Panc1 (cell line): ENCODE measurements at regions of chr20 and their contacts with region 1.

Region 1: DNA sequence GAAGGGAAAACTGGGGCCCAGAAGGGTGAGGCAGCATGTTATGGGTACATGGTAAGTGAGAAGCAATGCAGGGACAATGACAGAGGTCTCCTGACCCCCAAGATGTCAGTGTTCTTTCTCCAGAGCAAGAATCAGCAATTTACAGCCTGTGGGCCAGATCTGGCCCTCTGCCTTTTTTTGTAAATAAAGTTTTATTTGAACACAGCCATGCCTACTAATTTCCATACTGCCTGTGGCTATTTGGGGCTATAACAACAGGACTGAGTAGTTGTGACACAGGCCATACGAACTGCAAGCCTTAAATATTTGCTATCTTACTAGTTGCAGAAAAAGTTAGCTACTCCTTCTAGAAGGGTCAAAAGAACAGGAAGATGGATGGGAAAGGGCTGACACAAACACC is 52.5 kb downstream of the PTPRT start:
- DNase-seq: no peak
- ATAC-seq: no peak
- H3K4me3 ChIP-seq: no peak overlapping the region
- H3K27ac ChIP-seq: no peak overlapping the region
- H3K4me1 ChIP-seq: no peaks in the 10 kb centered on the region
- H3K27me3 ChIP-seq: no peaks in the 10 kb centered on the region
- CTCF ChIP-seq: no peak

Region 2: GRCh38 chr20:43032459-43032858 is 104.7 kb before region 1 on chr20:
- CTCF ChIA-PET with region 1: no interaction called
- POLR2A ChIA-PET with region 1: interaction called, 11 read pairs
- in situ Hi-C with region 1: no loop called
- intact Hi-C with region 1: no loop called
- DNase-seq: no peak
- ATAC-seq: no peak
- H3K4me3 ChIP-seq: no peak overlapping the region
- H3K27ac ChIP-seq: no peak overlapping the region
- H3K4me1 ChIP-seq: no peaks in the 10 kb centered on the region
- H3K27me3 ChIP-seq: no peaks in the 10 kb centered on the region
- CTCF ChIP-seq: no peak